Vagina (tissue), 2 donors: ENCODE measurements at regions of chr1 and their contacts with region 1.

Region 1: DNA sequence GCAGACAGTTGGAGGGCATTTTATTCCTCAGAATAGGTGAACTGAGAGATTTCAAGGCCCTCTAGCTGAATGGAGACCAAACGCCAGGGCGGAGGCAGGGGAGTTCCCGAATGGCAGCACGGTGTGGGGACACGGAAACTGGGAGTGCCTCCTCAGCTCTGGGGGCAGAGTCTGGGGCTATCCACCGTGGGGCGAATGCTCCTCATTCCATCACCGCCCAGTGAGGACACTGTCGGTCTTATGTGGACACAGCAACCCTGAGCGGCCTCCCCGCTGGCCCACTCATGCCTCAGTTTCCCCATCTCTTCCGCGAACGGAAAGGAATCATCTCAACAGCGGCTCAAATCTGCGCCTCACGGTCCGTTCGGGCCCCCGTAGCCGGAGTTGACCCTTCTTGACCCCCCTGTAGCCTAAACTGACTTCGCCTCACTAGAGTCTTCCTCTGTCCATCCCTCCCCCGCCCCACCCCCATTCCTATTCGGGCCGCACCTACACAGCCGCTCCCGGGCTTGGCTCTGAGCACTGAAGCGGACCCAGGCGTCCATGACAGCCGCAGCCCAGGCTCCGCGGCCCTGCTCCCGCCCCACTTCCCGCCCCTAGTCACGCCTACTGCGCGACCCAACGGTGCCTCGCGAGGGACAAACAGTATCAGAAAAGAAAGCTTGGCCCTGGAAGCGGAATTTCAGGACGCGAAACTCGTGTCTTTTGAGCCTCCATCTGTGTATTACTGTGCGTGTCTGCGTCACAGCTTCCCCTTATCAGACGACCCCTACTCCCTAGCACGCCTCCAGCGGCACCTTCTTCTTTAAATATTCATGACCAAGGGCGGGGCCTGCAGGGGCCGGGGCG is at the start of gene PEX11B:
- DNase-seq: peak in 1 of 2 donors; percentile 96
- H3K4me3 ChIP-seq: peak within 1 kb of the TSS; percentile 94 to 97
- H3K27ac ChIP-seq: peak within 1 kb of the TSS; percentile 81
- H3K4me1 ChIP-seq: peaks cover 31% of the 10 kb centered on the region
- H3K27me3 ChIP-seq: no peaks in the 10 kb centered on the region
- CTCF ChIP-seq: no peak
- POLR2A ChIP-seq: peak in 1 of 2 donors; percentile 37
- total RNA-seq, gene PEX11B: 23.6 TPM

Region 2: GRCh38 chr1:145782166-145783099 is 135.9 kb before region 1 on chr1:
- intact Hi-C with region 1: no loop called
- DNase-seq: no peak
- H3K4me3 ChIP-seq: no peak overlapping the region
- H3K27ac ChIP-seq: peak overlapping the region; percentile 53
- H3K4me1 ChIP-seq: peaks cover 15% of the 10 kb centered on the region
- H3K27me3 ChIP-seq: no peaks in the 10 kb centered on the region
- CTCF ChIP-seq: no peak
- POLR2A ChIP-seq: no peak

Region 3: GRCh38 chr1:145858894-145859490 is 59.4 kb before region 1 on chr1 and contains the start of gene PIAS3:
- intact Hi-C with region 1: loop called (anchors 10 kb)
- DNase-seq: peak in 1 of 2 donors; percentile 96
- H3K4me3 ChIP-seq: peak within 1 kb of the TSS; percentile 66 to 88
- H3K27ac ChIP-seq: peak within 1 kb of the TSS; percentile 86
- H3K4me1 ChIP-seq: peaks cover 20% of the 10 kb centered on the region
- H3K27me3 ChIP-seq: no peaks in the 10 kb centered on the region
- CTCF ChIP-seq: no peak
- POLR2A ChIP-seq: peak in 1 of 2 donors; percentile 77
- total RNA-seq, gene PIAS3: 40.5 TPM

Region 4: DNA sequence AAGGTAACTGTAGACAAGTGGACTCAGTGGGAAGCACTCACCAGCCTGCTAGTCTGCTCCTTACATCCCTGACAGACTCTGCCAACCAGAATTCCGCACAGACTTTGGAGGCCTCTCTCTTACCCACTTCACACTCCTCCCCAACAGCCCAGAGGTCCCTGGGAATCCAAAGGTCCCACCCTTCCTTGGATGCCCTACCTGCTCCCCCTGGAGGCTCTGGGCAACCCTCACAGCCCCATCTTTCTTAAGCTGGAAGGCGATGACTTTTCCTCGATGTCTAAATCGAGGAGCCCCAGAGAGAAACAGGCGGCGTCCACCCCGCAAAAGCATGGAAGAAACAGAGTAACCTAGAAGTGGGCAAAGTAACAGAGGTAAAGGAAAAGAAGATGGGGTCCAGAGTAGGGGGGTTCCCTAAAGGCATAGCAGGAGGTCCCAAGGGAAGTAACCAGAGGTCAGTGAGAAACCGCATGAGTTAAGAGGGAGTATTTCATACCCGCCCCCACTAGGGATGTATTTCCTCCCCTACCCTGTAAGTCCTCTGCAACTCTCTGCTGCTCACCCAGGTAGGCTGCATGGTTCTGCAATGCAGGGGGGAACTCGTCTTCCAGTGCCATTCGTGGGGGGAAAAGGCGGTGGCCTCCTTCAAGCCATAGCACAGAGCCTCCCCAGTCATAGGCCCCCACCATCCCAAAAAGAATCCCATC is 16.9 kb before region 1 on chr1:
- intact Hi-C with region 1: no loop called
- DNase-seq: no peak
- H3K4me3 ChIP-seq: no peak overlapping the region
- H3K27ac ChIP-seq: no peak overlapping the region
- H3K4me1 ChIP-seq: no peaks in the 10 kb centered on the region
- H3K27me3 ChIP-seq: no peaks in the 10 kb centered on the region
- CTCF ChIP-seq: no peak
- POLR2A ChIP-seq: no peak

Region 5: DNA sequence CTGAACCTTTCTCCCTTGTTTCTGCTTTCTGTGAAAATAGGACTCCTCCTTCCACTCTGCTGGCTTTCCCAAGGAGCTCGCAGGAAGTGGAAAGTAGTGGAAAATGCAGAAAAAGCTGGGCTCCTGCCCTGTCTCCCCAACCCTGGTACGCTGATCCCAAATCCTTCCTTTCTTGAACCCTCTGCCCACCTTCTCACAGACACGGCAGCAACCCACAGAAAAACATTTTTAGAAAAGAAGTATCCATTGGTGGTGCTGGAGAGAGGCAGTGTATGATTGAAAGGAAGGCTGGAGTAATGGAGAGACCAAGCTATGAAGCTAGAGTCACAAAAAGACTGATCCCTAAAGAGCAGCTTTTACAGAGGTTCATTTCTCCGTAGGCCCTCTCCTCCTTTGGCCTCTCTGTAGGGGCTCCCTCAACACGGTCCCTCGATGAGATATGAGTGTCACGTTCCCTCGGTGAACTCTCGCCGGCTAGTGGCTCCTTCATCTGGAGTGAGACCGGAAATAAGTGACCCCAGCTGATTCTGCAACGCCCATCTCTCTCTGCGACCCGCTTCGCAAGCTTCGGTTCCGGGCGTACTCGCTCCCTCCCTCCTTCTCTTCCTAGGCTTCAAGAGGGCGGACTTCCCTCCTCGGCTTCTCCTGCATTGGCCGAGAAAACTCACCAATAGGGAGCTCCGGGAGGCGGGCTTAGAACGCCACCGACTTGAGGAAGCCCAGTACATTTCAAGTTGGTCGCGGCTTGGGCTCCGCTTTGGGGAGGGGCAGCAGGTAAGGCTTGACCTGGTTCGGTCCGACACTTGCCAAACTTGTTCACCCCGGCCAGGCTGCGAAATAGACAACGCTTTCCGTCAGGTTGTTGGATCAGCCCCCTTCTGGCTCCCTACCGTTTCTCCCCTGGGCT is 45.9 kb after region 1 on chr1 and contains the starts of genes ANKRD34A and POLR3GL:
- intact Hi-C with region 1: loop called (anchors 5 kb)
- DNase-seq: peak in 1 of 2 donors; percentile 99
- H3K4me3 ChIP-seq: peak within 1 kb of the TSS; percentile 67 to 72
- H3K27ac ChIP-seq: peak within 1 kb of the TSS; percentile 95
- H3K4me1 ChIP-seq: peaks cover 56% of the 10 kb centered on the region
- H3K27me3 ChIP-seq: no peaks in the 10 kb centered on the region
- CTCF ChIP-seq: no peak
- POLR2A ChIP-seq: peak; percentile 91 to 97
- total RNA-seq, gene ANKRD34A: 1.7 TPM
- total RNA-seq, gene POLR3GL: 15.0 TPM

Region 6: GRCh38 chr1:146012737-146013403 is 94.5 kb after region 1 on chr1:
- intact Hi-C with region 1: loop called (anchors 10 kb)
- DNase-seq: no peak
- H3K4me3 ChIP-seq: no peak overlapping the region
- H3K27ac ChIP-seq: no peak overlapping the region
- H3K4me1 ChIP-seq: no peaks in the 10 kb centered on the region
- H3K27me3 ChIP-seq: no peaks in the 10 kb centered on the region
- CTCF ChIP-seq: peak; percentile 62 to 87 (median 80)
- POLR2A ChIP-seq: no peak